ENCODE measurements at regions of chr2 and their contacts with region 1.

Region 1: DNA sequence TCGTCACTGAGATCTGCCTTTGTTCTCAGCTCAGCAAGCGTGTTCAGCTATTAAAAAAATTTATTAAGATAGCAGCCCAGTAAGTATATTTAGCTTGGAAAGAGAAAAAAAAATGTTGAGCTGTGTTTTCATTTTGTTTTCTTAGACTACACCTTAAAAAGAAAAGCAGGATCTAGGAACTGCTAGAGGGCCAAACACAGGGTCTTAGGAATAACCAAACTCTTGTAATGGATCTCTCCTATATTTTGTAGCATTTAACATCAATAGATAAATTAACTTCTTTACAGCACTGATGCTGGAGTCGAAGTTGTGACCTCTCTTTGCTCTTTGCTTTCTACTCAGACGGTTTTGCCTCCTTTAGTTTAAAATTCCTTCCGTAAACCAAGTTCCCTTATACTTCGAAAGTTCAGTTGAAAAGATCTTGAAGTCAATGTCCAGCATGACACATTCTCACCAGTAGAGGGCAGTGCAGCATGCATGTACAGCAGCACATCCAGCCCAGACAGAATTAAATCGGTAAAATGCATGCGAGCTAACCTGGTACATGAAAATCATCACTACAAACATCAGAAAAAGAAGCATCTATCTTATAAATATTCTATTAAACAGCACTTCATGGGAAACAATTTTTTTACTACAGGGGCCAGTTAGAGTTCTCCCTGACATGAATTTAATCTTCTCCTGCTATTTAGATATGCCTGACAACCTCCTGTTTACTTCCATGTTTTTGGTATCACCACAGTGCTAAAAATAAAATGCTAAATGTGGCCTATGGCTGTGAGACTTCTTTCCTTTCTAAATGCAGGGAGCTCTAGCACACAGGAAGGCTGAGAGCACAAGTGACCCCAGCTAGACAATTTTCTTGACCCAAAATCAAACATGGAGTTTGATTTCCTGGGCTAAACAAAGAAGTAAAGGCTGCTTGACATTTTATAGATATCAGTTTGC is 48.2 kb upstream of the MAP3K20 start:
- DNase-seq: peak; percentile 86
- H3K4me3 Mint-ChIP-seq: no peak overlapping the region
- H3K27ac Mint-ChIP-seq: no peak overlapping the region
- H3K4me1 Mint-ChIP-seq: no peaks in the 10 kb centered on the region
- H3K27me3 Mint-ChIP-seq: peaks cover 5% of the 10 kb centered on the region

Region 2: DNA sequence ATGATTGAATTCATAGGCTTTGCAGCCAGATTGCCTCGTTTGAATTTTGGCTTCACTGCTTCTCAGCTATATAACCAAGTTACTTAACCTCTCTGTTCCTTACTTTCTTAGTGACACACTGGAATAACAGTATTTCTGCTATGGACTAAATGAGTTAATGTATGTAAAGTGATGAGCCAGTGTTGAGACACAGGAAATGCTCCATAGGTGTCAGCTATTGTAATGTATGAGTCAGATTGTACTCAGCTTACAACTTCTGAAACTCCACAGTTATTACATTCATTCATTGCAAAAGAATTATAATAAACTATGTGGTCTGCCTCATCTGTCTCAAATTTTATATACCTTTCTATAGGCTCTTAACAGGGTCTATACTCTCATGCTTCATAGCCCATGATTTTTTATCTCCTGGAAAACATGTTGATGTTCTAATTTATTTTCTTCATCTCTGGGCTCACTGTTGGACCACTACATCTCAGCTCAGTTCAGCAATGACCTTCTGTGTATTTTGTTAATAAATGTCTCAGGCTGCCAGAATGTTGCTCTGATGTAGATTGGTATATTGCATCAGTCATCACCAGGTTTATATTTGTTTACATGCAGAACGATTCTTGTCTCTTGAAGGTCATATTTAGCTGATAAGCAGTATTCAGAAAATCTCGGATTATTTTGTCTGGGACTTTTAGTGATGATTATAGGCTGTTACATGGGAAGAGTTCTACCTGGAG is 124.4 kb after region 1 on chr2:
- CTCF ChIA-PET with region 1: no interaction called
- DNase-seq: no peak
- H3K4me3 Mint-ChIP-seq: no peak overlapping the region
- H3K27ac Mint-ChIP-seq: no peak overlapping the region
- H3K4me1 Mint-ChIP-seq: peaks cover 21% of the 10 kb centered on the region
- H3K27me3 Mint-ChIP-seq: peaks cover 4% of the 10 kb centered on the region

Region 3: DNA sequence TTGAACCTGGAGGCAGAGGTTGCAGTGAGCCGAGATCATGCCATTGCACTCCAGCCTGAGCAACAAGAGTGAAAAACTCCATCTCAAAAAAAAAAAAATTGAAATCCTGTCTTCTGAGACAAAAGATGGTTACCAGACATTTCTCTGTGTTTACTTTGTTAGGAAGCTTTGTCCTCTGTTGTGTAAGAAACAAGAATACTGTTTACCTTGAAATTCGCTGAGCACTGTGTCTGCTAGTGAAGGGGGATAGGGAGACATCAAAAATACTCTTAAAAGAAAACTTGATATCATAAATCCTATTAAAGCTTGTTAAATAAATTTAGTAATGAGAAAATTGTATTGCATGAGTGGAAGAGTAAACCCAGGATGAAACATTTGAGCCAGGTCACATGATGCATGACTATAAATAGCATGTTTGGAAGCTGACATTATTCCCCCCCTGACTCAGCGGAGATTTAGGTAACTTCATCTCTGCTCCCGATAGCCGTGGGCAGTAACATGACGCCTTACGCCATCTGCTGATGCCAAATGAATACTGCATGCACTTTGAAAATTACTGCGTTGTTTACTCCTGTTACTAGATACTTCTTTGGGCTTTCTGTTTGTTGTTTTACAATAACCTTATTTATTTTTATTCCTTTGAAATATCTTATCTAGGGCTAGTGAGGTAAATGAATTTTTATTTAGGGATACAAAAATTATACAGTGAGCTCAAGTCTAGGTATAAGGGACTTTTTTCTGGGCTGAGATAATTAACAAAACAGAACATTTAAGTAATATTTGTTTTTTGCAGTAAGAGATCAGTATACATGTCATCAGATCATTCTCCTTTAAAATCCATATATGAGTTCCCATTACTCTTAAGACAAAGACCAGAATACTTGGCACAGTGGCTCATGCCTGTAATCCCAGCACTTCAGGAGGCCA is 183.1 kb after region 1 on chr2:
- CTCF ChIA-PET with region 1: interaction called, 173 read pairs
- DNase-seq: peak; percentile 58
- H3K4me3 Mint-ChIP-seq: no peak overlapping the region
- H3K27ac Mint-ChIP-seq: no peak overlapping the region
- H3K4me1 Mint-ChIP-seq: no peaks in the 10 kb centered on the region
- H3K27me3 Mint-ChIP-seq: peaks cover 3% of the 10 kb centered on the region

Region 4: DNA sequence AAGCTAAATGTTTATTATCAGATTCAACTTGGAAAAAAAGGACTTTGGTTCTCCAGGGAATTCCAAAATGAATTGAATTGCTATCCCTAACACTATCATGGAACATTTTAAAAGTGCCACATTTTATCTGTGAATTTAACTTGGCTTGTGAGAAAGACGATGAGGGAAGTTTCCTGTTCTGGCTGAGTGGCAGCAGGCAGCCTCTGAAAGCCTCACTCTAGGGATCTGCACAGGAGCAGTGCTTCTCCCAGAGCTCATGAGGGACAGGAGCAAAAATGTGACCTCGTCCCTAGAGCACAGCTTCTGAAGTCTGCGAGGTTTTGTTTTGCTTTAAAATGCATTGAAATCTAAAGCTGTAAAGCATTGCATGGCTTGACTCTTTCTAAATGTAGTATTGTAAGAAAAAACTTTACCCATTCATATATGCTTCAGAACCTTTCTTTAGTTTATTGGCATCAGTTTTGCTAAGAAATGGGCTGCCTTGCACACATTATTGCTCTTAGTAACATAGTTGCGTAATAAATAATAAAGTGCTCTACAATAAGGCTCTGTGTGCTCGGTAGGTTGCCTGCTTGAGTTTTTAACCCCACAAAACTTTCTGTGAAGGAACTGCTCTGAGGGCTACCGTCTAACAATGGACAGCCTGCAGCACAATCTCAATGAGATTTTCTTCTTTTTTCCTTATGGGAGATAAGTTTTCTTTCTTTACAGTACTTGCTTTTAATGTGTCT is 191.0 kb after region 1 on chr2:
- CTCF ChIA-PET with region 1: interaction called, 173 read pairs
- DNase-seq: no peak
- H3K4me3 Mint-ChIP-seq: no peak overlapping the region
- H3K27ac Mint-ChIP-seq: no peak overlapping the region
- H3K4me1 Mint-ChIP-seq: peaks cover 9% of the 10 kb centered on the region
- H3K27me3 Mint-ChIP-seq: no peaks in the 10 kb centered on the region

Region 5: GRCh38 chr2:173402405-173402974 is 375.0 kb after region 1 on chr2:
- CTCF ChIA-PET with region 1: interaction called, 12 read pairs
- DNase-seq: peak; percentile 82
- H3K4me3 Mint-ChIP-seq: no peak overlapping the region
- H3K27ac Mint-ChIP-seq: no peak overlapping the region
- H3K4me1 Mint-ChIP-seq: peaks cover 6% of the 10 kb centered on the region
- H3K27me3 Mint-ChIP-seq: peaks cover 50% of the 10 kb centered on the region

Measured in activated naive CD4-positive, alpha-beta T cell treated with anti-CD3 and anti-CD28 coated beads, Interleukin-2, amount 10 ng/mL, durations not matched to agents 7 days and 5 days (primary cell).